ENCODE measurements at regions of chr20 and their contacts with region 1.

Region 1: DNA sequence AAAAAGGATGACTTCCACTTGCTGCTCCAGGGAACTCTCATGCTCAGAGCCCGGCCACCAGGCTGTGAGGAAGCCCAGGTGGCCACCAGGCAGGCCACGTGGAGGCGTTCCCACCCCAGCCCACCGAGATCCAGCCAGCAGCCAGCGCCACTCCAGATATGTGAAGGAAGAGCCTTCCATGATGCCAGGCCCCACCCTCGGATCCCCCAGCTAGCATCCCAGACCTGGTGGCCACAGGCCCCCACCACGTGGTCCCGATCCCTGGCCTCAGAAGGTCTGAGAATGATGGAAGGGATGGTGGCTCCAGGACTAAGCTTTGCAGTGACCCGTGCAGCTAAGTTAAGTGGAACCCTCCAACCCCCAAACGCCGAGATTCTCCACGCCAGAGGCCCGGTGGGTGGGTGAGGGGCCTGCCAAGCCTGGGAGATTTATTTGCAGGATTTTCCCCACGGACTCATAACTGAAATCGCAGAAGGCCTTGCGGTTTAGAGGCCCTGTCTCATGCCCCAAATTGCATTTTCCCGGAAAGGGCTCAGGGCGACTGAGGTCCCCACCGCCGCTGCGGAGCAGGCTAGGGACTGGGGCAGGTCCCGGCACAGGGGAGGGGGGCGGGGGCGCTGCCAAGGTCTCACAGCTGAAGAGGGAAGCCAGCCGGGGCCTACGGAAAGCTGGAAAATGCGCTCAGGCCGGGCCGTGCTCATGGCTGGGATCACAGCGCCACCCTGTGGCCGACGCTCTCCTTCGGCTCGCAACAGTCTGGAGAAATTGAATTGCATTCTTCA is 31.1 kb upstream of the CST7 start:
- DNase-seq: peak; percentile 67 to 81 (median 74)
- H3K4me3 ChIP-seq: peak overlapping the region in 10 of 59 donors; percentile 17 to 48 (median 26)
- H3K27ac ChIP-seq: peak overlapping the region in 6 of 59 donors; percentile 9 to 46 (median 34)
- H3K27me3 ChIP-seq: no peaks in the 10 kb centered on the region
- CTCF ChIP-seq: peak; percentile 77 to 96 (median 92)

Region 2: DNA sequence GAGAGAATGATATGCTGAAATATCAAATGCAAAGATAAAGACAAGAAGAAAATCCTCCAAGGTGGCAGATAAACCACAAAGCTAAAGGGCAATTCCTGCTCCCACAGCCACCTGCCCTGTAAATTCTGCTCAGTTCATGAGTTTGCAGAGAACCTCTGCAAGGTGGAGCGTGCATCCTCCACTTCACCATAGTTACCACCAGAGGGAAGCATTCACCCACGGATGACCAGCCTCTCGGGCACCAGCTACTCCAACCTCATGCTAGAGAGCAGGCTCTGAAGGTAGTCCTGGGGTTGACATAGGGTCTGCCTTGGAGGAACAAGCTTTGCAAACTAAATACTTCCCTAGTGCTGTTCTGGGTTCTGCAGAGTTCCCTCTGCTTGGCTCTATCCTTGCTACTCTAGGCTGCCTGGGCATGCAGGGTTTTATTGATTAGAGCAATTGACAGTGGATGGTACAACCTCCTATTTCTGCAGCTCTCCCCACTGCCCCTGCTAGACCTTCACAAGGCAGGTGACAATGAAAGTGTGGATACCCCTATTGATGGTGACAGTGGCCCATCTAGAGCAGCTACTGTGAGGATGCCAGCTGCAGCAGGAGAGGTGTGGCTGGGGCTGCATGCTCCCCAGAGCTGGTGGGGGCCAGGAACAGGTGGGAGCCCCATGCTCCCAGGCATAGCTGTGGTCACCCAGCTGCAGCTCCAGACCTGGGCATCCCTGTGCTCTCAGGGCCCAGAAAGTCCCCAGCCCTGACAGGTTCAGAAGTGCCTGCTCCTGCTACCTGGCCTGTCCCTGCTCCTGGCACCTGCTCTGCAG is 980.5 kb before region 1 on chr20:
- intact Hi-C with region 1: loop called (anchors 5 to 10 kb)
- DNase-seq: peak; percentile 42 to 84 (median 74)
- H3K4me3 ChIP-seq: no peak overlapping the region
- H3K27ac ChIP-seq: no peak overlapping the region
- H3K27me3 ChIP-seq: no peaks in the 10 kb centered on the region
- CTCF ChIP-seq: peak; percentile 64 to 99 (median 91)

Region 3: DNA sequence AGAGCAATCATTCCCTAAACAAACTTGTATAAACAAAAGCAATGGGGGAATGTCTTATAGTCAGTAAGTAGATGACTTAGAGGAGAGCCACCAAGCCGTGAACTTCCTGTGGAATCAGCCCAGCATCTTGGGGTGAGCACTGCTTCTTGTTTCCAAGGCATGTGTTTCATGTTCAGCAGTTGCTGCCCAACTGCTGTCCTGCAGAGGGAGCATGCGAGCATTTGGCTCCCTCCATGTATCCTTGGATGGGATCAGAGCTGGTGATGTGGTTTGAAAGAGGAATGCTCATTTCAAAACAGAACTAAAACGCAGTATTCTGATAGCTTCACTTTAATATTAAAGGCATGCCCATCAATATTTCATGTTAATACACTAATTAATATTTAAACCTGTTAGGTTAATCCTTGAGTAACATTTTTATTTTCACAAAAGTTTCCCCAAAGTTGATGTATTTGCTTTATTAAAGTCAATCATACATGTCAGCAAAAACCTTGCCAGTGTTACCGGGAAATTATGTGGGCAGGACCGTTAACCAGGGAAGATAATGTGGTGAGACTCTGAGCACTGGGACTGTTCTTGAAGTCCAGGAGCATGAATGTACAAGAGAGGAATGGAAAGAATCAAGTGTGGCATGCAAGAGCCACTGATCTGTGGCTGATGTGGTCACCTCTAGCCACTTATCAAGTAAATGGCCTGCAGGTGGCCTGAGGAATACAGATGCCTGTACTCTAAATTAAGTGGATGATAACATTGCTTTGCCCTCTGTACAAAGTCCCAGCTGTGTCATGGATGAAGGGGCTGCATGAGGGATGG is 757.2 kb before region 1 on chr20:
- intact Hi-C with region 1: loop called (anchors 5 kb)
- DNase-seq: peak in 9 of 10 donors; percentile 22 to 74 (median 63)
- H3K4me3 ChIP-seq: peak overlapping the region in 1 of 59 donors; percentile 12
- H3K27ac ChIP-seq: no peak overlapping the region
- H3K27me3 ChIP-seq: no peaks in the 10 kb centered on the region
- CTCF ChIP-seq: peak; percentile 35 to 86 (median 78)

Region 4: GRCh38 chr20:24303381-24303780 is 614.6 kb before region 1 on chr20:
- intact Hi-C with region 1: loop called in 1 of 2 experiments (anchors 5 kb)
- DNase-seq: peak in 3 of 10 donors; percentile 26 to 69 (median 65)
- H3K4me3 ChIP-seq: no peak overlapping the region
- H3K27ac ChIP-seq: no peak overlapping the region
- H3K27me3 ChIP-seq: peaks cover 0 to 8% (median 0%) of the 10 kb centered on the region in 45 donors
- CTCF ChIP-seq: peak in 51 of 56 donors; percentile 20 to 76 (median 54)

Region 5: GRCh38 chr20:24634855-24635254 is 283.1 kb before region 1 on chr20:
- intact Hi-C with region 1: loop called in 1 of 2 experiments (anchors 10 kb)
- DNase-seq: peak; percentile 37 to 91 (median 80)
- H3K4me3 ChIP-seq: peak overlapping the region in 2 of 59 donors; percentile 3 to 10
- H3K27ac ChIP-seq: peak overlapping the region in 47 of 59 donors; percentile 0 to 78 (median 50)
- H3K27me3 ChIP-seq: no peaks in the 10 kb centered on the region
- CTCF ChIP-seq: peak in 2 of 56 donors; percentile 9 to 20

Region 6: GRCh38 chr20:25204550-25205276 is 286.7 kb after region 1 on chr20:
- intact Hi-C with region 1: no loop called
- DNase-seq: peak in 1 of 10 donors; percentile 13
- H3K4me3 ChIP-seq: no peak overlapping the region
- H3K27ac ChIP-seq: peak overlapping the region in 11 of 59 donors; percentile 0 to 59 (median 17)
- H3K27me3 ChIP-seq: no peaks in the 10 kb centered on the region
- CTCF ChIP-seq: no peak

Measured in dorsolateral prefrontal cortex (tissue), 120 donors.